ENCODE measurements at regions of chr13 and their contacts with region 1.

Region 1: DNA sequence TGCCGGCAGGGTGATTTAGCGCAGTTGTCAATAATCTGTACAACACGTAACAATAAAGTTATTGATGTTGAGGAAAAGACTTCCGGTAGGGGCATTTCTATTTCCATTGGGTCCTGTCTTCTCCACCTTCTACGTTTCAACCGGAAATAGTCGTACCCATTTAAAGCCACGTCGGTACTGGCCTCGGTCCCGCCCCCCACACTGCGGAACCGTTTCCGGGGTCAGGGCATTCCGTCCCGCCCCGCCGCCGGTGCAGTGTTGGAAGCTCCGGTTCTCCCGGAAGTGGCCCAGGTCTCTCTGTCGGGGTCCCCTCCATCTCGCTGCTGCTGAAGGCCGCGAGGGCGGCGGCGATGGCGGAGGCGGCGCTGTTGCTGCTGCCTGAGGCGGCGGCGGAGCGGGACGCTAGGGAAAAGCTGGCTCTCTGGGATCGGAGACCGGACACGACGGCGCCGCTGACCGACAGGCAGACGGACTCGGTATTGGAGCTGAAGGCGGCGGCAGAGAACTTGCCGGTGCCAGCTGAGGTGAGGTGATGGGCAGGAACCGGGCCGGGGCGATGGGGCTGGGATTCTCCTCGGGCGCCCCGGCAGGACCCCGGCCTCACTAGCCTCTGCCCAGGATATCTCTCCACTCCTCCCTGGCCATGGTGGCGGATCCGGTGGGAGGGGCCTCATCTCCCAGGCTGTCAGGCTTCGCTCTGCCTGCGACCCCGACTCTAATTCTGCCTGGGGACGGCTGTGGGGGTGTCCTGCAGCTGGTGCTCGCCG is at the start of gene COG3:
- DNase-seq: peak; percentile 97
- total RNA-seq, gene COG3: 21.7 to 27.9 TPM

Region 2: GRCh38 chr13:45367358-45367757 is 97.5 kb before region 1 on chr13:
- intact Hi-C with region 1: loop called in 1 of 2 experiments (anchors 10 kb)
- DNase-seq: peak; percentile 85

Region 3: GRCh38 chr13:45412274-45413049 is 52.4 kb before region 1 on chr13:
- intact Hi-C with region 1: loop called in 1 of 2 experiments (anchors 2 kb)
- DNase-seq: no peak